Dendritic cell treated with granulocyte-macrophage colony-stimulating factor and Interleukin-4, amounts not matched to agents 40 ng/mL and 50 ng/mL, for 4 days (primary cell): ENCODE measurements at regions of chr14 and their contacts with region 1.

Region 1: GRCh38 chr14:30375296-30375892 is 183.6 kb upstream of the G2E3 start:
- H3K4me3 Mint-ChIP-seq: no peak overlapping the region
- H3K27ac Mint-ChIP-seq: no peak overlapping the region
- H3K4me1 Mint-ChIP-seq: peaks cover 6% of the 10 kb centered on the region
- H3K27me3 Mint-ChIP-seq: peaks cover 13% of the 10 kb centered on the region

Region 2: GRCh38 chr14:30349520-30349919 is 25.9 kb before region 1 on chr14:
- intact Hi-C with region 1: no loop called
- H3K4me3 Mint-ChIP-seq: no peak overlapping the region
- H3K27ac Mint-ChIP-seq: no peak overlapping the region
- H3K4me1 Mint-ChIP-seq: no peaks in the 10 kb centered on the region
- H3K27me3 Mint-ChIP-seq: no peaks in the 10 kb centered on the region

Region 3: DNA sequence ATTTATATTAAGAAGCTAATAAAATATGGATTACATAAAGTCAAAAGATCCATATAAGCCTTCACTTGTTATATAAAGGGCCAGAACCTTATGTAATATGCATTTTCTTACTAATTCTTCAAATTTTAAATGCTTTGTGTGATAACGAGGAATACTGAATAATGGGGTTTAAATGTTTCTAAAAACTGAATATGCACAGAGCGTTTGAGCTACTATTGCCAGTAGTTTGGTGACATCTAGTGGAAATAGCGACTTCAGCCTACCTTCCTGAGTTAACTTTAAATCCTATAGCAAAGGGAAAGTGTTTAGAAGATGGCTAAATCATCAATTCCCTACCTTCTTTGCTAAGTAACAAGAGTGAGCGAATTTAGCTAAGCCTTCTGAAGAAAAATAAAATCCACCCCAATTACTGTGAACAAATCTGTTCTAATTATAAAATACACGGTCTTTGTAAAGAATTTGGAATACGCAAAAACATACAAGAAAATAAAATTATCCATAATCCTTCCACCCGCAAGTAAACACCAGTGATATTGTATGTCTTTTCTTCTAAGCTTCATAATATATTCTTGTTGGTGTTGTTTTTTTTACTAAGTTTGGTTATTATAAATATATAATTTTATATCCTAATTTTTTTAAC is 68.1 kb after region 1 on chr14:
- intact Hi-C with region 1: loop called (anchors 2 kb)
- H3K4me3 Mint-ChIP-seq: no peak overlapping the region
- H3K27ac Mint-ChIP-seq: no peak overlapping the region
- H3K4me1 Mint-ChIP-seq: no peaks in the 10 kb centered on the region
- H3K27me3 Mint-ChIP-seq: peaks cover 9% of the 10 kb centered on the region

Region 4: GRCh38 chr14:30521899-30522736 is 146.7 kb after region 1 on chr14:
- intact Hi-C with region 1: loop called (anchors 1 kb)
- H3K4me3 Mint-ChIP-seq: no peak overlapping the region
- H3K27ac Mint-ChIP-seq: no peak overlapping the region
- H3K4me1 Mint-ChIP-seq: no peaks in the 10 kb centered on the region
- H3K27me3 Mint-ChIP-seq: no peaks in the 10 kb centered on the region

Region 5: GRCh38 chr14:30610787-30611343 is 235.5 kb after region 1 on chr14:
- intact Hi-C with region 1: loop called (anchors 1 kb)
- H3K4me3 Mint-ChIP-seq: no peak overlapping the region
- H3K27ac Mint-ChIP-seq: peak overlapping the region; percentile 32
- H3K4me1 Mint-ChIP-seq: peaks cover 22% of the 10 kb centered on the region
- H3K27me3 Mint-ChIP-seq: no peaks in the 10 kb centered on the region